ENCODE measurements at regions of chr19 and their contacts with region 1.

Region 1: DNA sequence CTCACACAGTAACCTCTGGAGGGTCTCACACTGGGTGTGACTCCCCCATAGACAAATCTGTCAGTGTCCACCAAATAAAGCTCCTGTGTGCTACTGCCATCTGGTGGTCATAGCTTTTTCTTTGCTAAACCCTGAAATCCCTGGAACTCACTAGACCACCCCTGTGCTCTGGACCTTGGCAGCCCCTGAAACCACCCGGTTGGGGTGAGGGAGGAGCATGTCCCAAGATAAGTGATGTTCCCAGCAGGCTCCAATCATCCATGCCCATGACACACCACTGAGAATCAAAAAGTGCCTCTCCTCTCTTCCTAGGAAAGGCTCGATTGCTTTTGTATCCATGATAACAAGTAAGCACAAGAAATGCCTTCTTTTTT is 6.5 kb upstream of the HSD17B14 start:
- DNase-seq: peak; percentile 71
- ATAC-seq: peak; percentile 87
- H3K4me3 Mint-ChIP-seq: no peak overlapping the region
- H3K27ac Mint-ChIP-seq: no peak overlapping the region
- H3K4me1 Mint-ChIP-seq: peaks cover 6% of the 10 kb centered on the region
- H3K27me3 Mint-ChIP-seq: no peaks in the 10 kb centered on the region; the same call in 1 of the 2 replicates
- CTCF ChIP-seq: peak; percentile 70

Region 2: DNA sequence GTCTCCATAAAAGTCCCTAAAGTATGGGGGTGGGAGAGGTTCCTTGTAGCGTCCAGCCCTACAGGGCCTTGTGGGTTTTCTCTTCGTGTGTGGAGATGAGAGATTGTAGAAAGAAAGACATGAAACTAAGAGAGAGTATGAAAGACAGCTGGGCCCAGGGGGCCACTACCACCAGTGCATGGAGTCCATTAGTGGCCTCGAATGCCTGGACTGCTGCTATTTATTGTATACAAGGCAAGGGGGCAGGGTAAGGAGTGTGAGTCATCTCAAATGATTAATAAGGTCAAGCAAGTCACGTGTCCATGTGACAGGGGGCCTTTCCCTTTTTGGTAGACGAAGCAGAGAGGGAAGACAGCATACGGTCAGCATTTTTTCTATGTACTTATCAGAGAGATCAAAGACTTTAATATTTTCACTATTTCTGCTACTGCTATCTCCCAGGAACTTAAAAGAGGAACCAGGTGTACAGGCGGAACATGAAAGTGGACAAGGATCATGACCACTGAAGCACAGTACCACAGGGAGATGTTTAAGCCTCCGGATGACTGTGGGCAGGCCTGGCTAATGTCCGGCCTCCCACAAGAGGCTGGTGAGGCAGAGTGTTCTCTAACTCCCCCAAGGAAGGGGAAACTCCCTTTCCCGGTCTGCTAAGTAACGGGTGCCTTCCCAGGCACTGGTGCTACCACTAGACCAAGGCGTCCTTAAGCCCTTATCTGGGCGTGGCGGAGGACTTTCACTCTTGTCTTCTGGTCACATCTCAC is 62.0 kb before region 1 on chr19:
- CTCF ChIA-PET with region 1: interaction called, 12 read pairs
- POLR2A ChIA-PET with region 1: interaction called, 4 read pairs
- DNase-seq: no peak
- ATAC-seq: no peak
- H3K4me3 Mint-ChIP-seq: no peak overlapping the region
- H3K27ac Mint-ChIP-seq: no peak overlapping the region
- H3K4me1 Mint-ChIP-seq: peaks cover 2% of the 10 kb centered on the region; the same call in 1 of the 2 replicates
- H3K27me3 Mint-ChIP-seq: peaks cover 8% of the 10 kb centered on the region
- CTCF ChIP-seq: no peak

Region 3: GRCh38 chr19:48806518-48806817 is 36.3 kb before region 1 on chr19:
- CTCF ChIA-PET with region 1: interaction called, 19 read pairs
- POLR2A ChIA-PET with region 1: interaction called, 3 read pairs
- DNase-seq: peak; percentile 76
- ATAC-seq: no peak
- H3K4me3 Mint-ChIP-seq: peak overlapping the region; percentile 36; the same call in 1 of the 2 replicates
- H3K27ac Mint-ChIP-seq: peak overlapping the region; percentile 79; the same call in 1 of the 2 replicates
- H3K4me1 Mint-ChIP-seq: peaks cover 32% of the 10 kb centered on the region
- H3K27me3 Mint-ChIP-seq: peaks cover 17% of the 10 kb centered on the region
- CTCF ChIP-seq: no peak

Region 4: GRCh38 chr19:48858984-48859710 is 16.4 kb after region 1 on chr19:
- CTCF ChIA-PET with region 1: interaction called, 10 read pairs
- POLR2A ChIA-PET with region 1: no interaction called
- DNase-seq: peak; percentile 76
- ATAC-seq: peak; percentile 43
- H3K4me3 Mint-ChIP-seq: peak overlapping the region; percentile 50
- H3K27ac Mint-ChIP-seq: peak overlapping the region; percentile 87; the same call in 1 of the 2 replicates
- H3K4me1 Mint-ChIP-seq: peaks cover 10% of the 10 kb centered on the region
- H3K27me3 Mint-ChIP-seq: no peaks in the 10 kb centered on the region; the same call in 1 of the 2 replicates
- CTCF ChIP-seq: no peak

Region 5: GRCh38 chr19:48887861-48888612 is 45.3 kb after region 1 on chr19:
- CTCF ChIA-PET with region 1: no interaction called
- POLR2A ChIA-PET with region 1: no interaction called
- DNase-seq: peak; percentile 46
- ATAC-seq: peak; percentile 84
- H3K4me3 Mint-ChIP-seq: no peak overlapping the region
- H3K27ac Mint-ChIP-seq: no peak overlapping the region
- H3K4me1 Mint-ChIP-seq: peaks cover 12% of the 10 kb centered on the region
- H3K27me3 Mint-ChIP-seq: peaks cover 10% of the 10 kb centered on the region
- CTCF ChIP-seq: no peak

Region 6: GRCh38 chr19:48899781-48900476 is 57.2 kb after region 1 on chr19 and contains the start of gene NUCB1:
- CTCF ChIA-PET with region 1: interaction called, 19 read pairs
- POLR2A ChIA-PET with region 1: interaction called, 4 read pairs
- DNase-seq: peak; percentile 100
- ATAC-seq: peak; percentile 87
- H3K4me3 Mint-ChIP-seq: peak within 1 kb of the TSS; percentile 97
- H3K27ac Mint-ChIP-seq: peak within 1 kb of the TSS; percentile 99
- H3K4me1 Mint-ChIP-seq: peaks cover 11% of the 10 kb centered on the region
- H3K27me3 Mint-ChIP-seq: peaks cover 9% of the 10 kb centered on the region
- CTCF ChIP-seq: no peak
- total RNA-seq, gene NUCB1: 145 to 153 TPM (median 149 TPM) in 3 replicates